ENCODE measurements at regions of chr1 and their contacts with region 1.

Region 1: GRCh38 chr1:169546087-169546995 is 39.9 kb downstream of the F5 start:
- DNase-seq: no peak
- ATAC-seq: peak; percentile 73

Region 2: GRCh38 chr1:169466259-169467230 is 79.8 kb before region 1 on chr1:
- intact Hi-C with region 1: loop called (anchors 2 kb)
- DNase-seq: no peak
- ATAC-seq: no peak

Region 3: GRCh38 chr1:169711469-169712281 is 165.3 kb after region 1 on chr1 and contains the start of gene SELL:
- intact Hi-C with region 1: loop called (anchors 2 kb)
- DNase-seq: no peak
- ATAC-seq: peak; percentile 92
- total RNA-seq, gene SELL: 1.1 TPM

Region 4: DNA sequence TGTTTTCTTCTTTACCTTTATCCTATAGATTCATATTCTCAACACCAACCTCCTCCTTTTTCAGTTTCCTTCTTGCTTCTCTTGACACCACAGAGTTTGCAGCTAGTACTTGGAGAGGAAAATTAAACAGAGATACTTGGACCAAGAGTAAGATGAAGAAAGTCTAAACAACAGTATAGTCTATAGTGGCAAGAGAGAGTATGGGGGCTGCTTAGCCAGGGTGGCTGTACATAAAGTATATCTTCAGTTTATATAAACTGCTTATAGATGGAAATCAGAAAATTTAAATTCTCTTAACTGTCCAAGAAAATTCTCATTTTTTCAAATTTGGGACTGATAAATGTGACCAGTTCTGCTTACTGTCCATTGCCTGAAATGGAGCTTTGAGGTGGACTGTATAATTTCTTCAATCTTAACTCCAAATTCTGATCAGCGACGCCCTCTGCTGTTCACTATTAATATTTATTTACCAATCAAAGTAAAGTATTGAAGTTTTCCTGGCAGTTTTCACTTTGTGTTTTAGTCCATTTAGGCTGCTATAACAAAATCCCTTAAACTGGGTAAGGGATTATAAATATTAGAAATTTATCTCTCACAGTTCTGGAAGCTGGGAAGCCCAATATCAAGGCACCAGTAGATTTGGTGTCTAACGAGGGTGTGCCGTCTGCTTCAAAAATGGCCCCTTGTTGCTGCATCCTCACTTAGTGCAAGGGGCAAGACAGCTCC is 263.2 kb after region 1 on chr1:
- intact Hi-C with region 1: loop called (anchors 5 kb)
- DNase-seq: no peak
- ATAC-seq: no peak